ENCODE measurements at regions of chr10 and their contacts with region 1.

Region 1: GRCh38 chr10:33330543-33331378 is 3.7 kb downstream of the NRP1 start:
- DNase-seq: peak; percentile 86 to 94 (median 92)
- ATAC-seq: peak; percentile 18 to 20
- H3K4me3 ChIP-seq: peak overlapping the region; percentile 94
- H3K27ac ChIP-seq: no peak overlapping the region
- H3K4me1 ChIP-seq: peaks cover 2% of the 10 kb centered on the region
- H3K27me3 ChIP-seq: no peaks in the 10 kb centered on the region

Region 2: DNA sequence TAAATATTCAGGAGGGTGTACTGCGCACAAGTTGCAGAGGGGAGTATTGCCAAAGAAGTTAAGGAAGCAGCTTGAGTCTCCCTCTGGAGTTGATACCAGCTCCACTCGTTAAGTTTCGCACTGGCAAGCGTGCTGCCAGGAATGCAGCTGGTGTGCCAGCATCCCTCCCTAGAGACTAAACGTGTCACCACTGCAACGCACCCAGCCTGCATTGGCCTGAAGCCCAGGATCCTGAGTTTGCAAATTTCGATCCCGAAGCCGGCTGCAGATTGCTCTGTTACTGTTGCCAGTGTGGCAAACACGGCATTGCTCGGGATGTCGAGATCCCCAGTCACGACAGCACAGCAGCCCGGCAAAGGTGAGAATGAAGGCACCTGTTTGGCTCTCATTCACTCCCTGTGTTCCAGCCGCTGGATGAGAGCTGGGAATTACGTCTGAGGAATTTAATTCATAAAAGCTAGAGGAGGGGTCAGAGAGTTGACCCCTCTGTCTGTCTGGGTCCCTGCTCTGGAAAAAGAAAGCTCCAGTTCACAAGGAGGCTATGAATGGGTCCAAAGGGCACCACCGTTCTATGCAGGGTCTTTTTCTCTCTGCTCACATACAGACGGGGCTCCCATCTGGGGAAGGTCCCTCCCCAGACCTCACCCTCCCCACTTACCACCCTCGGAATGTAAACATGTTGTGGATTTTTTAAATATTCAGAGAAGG is 57.3 kb before region 1 on chr10:
- intact Hi-C with region 1: loop called in 2 of 4 experiments (anchors 10 kb)
- DNase-seq: peak; percentile 94 to 96 (median 95)
- ATAC-seq: peak; percentile 92 to 93
- H3K4me3 ChIP-seq: peak overlapping the region; percentile 17
- H3K27ac ChIP-seq: peak overlapping the region; percentile 89
- H3K4me1 ChIP-seq: peaks cover 12% of the 10 kb centered on the region
- H3K27me3 ChIP-seq: no peaks in the 10 kb centered on the region

Region 3: GRCh38 chr10:33661580-33662336 is 331.0 kb after region 1 on chr10:
- intact Hi-C with region 1: loop called in 1 of 4 experiments (anchors 5 kb)
- DNase-seq: peak; percentile 76 to 90 (median 88)
- ATAC-seq: peak; percentile 91 to 97
- H3K4me3 ChIP-seq: no peak overlapping the region
- H3K27ac ChIP-seq: peak overlapping the region; percentile 87
- H3K4me1 ChIP-seq: peaks cover 7% of the 10 kb centered on the region
- H3K27me3 ChIP-seq: no peaks in the 10 kb centered on the region

Region 4: DNA sequence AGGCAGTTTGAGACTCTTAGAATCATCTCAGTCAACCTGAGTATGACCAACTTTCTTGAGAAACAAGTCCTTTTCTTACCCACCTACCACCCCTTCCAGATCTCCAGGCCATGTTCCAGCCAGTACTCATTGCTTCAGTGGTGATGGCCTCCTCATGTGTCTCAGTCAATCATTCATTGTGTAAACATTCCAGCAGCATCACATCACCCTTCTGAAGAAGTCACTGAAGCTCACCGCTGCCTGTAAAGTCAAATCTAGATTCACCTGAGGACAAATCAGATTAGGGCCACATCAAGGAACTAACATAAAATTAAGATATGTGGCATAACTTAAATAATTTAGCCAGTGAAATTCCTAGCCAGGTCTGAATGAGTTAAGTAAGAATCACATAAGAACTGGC is 471.0 kb after region 1 on chr10:
- intact Hi-C with region 1: loop called in 1 of 4 experiments (anchors 5 kb)
- DNase-seq: no peak
- ATAC-seq: no peak
- H3K4me3 ChIP-seq: no peak overlapping the region
- H3K27ac ChIP-seq: no peak overlapping the region
- H3K4me1 ChIP-seq: peaks cover 3% of the 10 kb centered on the region
- H3K27me3 ChIP-seq: no peaks in the 10 kb centered on the region